ENCODE measurements at regions of chr22 and their contacts with region 1.

Region 1: DNA sequence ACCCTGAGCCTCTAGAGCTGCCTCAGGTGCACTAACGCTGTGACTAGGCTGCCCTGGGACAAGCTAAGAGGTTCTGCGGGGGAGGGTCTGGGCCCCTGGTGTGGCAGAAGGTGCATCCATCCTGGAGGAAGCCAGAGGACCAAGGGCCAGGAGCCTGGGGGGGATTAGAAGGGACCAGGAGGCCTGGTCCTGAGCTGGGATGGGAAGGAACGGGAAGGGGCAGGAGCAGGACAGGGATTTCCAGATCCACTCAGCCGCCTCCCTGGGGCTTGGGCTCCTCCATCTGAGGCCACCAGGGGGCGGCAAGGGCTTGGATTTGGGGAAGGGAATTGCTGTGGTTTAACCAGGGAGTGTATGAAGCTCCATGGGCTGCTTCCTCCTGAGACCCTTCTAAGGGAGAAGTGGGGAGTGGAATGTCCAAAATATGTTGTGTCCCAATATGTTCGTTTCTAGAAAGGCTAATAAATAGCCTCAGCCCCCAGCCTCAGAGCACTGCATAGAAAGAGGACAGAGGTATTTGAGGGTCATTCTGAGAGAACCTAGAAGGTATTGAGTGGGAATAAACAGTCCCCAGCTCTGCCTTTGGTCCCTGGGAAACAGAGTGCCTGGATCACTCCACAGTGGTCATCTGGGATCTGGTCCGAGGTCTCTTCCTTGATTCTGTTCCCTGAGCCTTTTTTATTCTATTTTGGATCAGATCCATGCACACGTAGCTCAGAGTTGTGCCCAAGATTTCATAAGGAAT is 17.4 kb upstream of the PRAME start:
- DNase-seq: peak in 1 of 2 experiments; percentile 86
- H3K4me3 ChIP-seq: no peak overlapping the region
- H3K27ac ChIP-seq: no peak overlapping the region
- H3K4me1 ChIP-seq: no peaks in the 10 kb centered on the region
- H3K27me3 ChIP-seq: peaks cover 23 to 49% (median 40%) of the 10 kb centered on the region in 4 experiments
- CTCF ChIP-seq: peak; percentile 71 to 82 (median 73)
- EP300 ChIP-seq: no peak
- POLR2A ChIP-seq: no peak
- RAD21 ChIP-seq: peak; percentile 53 to 65

Region 2: DNA sequence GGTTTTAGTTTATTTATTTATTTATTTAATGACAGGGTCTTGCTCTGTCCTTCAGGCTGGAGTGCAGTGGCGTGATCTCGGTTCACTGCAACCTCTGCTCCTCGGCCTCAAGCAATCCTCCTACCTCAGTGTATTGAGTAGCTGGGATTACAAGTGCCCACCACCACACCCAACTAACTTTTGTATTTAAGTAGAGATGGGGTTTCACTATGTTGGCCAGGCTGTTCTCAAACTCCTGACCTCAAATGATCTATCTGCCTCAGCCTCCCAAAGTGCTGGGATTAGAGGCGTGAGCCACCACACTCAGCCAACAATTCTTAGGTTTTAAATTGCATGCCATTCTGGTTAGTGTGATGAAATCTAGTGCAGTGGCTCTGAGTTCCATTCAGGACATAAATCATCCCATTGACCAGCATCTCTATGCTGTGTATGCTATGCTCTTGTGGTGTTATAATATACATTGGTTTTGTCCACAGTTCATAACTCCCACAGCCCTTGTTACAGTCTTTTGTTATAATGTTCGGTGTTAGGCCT is 96.3 kb before region 1 on chr22:
- CTCF ChIA-PET with region 1: no interaction called
- POLR2A ChIA-PET with region 1: no interaction called
- DNase-seq: no peak
- H3K4me3 ChIP-seq: no peak overlapping the region
- H3K27ac ChIP-seq: no peak overlapping the region
- H3K4me1 ChIP-seq: no peaks in the 10 kb centered on the region
- H3K27me3 ChIP-seq: peaks cover 0 to 26% (median 5%) of the 10 kb centered on the region in 4 experiments; a peak in 4 of 7 replicates
- CTCF ChIP-seq: no peak
- EP300 ChIP-seq: no peak
- POLR2A ChIP-seq: no peak
- RAD21 ChIP-seq: no peak

Region 3: GRCh38 chr22:22538226-22538989 is 38.0 kb before region 1 on chr22:
- CTCF ChIA-PET with region 1: no interaction called
- POLR2A ChIA-PET with region 1: no interaction called
- DNase-seq: no peak
- H3K4me3 ChIP-seq: no peak overlapping the region
- H3K27ac ChIP-seq: no peak overlapping the region
- H3K4me1 ChIP-seq: no peaks in the 10 kb centered on the region
- H3K27me3 ChIP-seq: peaks cover 12 to 36% (median 19%) of the 10 kb centered on the region in 4 experiments
- CTCF ChIP-seq: no peak
- EP300 ChIP-seq: no peak
- POLR2A ChIP-seq: no peak
- RAD21 ChIP-seq: no peak

Region 4: GRCh38 chr22:22591348-22592299 is 15.2 kb after region 1 on chr22:
- CTCF ChIA-PET with region 1: interaction called, 10 read pairs
- POLR2A ChIA-PET with region 1: no interaction called
- DNase-seq: no peak
- H3K4me3 ChIP-seq: no peak overlapping the region
- H3K27ac ChIP-seq: no peak overlapping the region
- H3K4me1 ChIP-seq: no peaks in the 10 kb centered on the region
- H3K27me3 ChIP-seq: peaks cover 21 to 52% (median 37%) of the 10 kb centered on the region in 4 experiments
- CTCF ChIP-seq: no peak
- EP300 ChIP-seq: no peak
- POLR2A ChIP-seq: no peak
- RAD21 ChIP-seq: no peak